ENCODE measurements at regions of chr5 and their contacts with region 1.

Region 1: GRCh38 chr5:148791334-148791667 is 35.1 kb upstream of the ADRB2 start:
- DNase-seq: no peak
- H3K4me3 ChIP-seq: no peak overlapping the region
- H3K27ac ChIP-seq: no peak overlapping the region
- H3K4me1 ChIP-seq: no peaks in the 10 kb centered on the region
- H3K27me3 ChIP-seq: no peaks in the 10 kb centered on the region
- CTCF ChIP-seq: no peak
- EP300 ChIP-seq: no peak
- POLR2A ChIP-seq: no peak
- RAD21 ChIP-seq: no peak

Region 2: GRCh38 chr5:148542812-148543211 is 248.5 kb before region 1 on chr5:
- CTCF ChIA-PET with region 1: no interaction called
- POLR2A ChIA-PET with region 1: no interaction called
- DNase-seq: no peak
- H3K4me3 ChIP-seq: no peak overlapping the region
- H3K27ac ChIP-seq: no peak overlapping the region
- H3K4me1 ChIP-seq: no peaks in the 10 kb centered on the region
- H3K27me3 ChIP-seq: peaks cover 0 to 1% (median 0%) of the 10 kb centered on the region in 4 experiments; a peak in 1 of 7 replicates
- CTCF ChIP-seq: no peak
- EP300 ChIP-seq: no peak
- POLR2A ChIP-seq: no peak
- RAD21 ChIP-seq: no peak

Region 3: DNA sequence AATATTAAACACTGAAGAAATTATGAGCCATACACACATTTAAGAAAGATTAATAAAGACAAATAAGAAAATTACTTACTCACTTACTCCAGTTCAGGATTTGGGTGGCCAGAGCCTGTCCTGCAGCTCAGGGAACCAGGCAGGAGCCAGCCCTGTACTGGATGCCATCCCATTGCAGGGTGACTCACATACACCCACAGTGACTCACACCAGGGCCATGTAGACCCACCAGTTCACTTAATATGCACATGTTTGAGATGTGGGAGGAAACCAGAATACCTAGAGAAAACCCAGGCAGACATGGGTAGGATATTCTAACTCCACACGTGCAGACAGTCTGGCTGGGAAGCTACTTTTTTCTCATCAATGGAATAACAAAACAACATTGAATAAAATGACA is 14.5 kb before region 1 on chr5:
- CTCF ChIA-PET with region 1: interaction called, 16 read pairs
- POLR2A ChIA-PET with region 1: no interaction called
- DNase-seq: no peak
- H3K4me3 ChIP-seq: no peak overlapping the region
- H3K27ac ChIP-seq: no peak overlapping the region
- H3K4me1 ChIP-seq: 0 out of 7 replicates have a peak, but pooled peaks cover 0 to 2% (median 0%) of the 10 kb centered on the region in 4 experiments
- H3K27me3 ChIP-seq: no peaks in the 10 kb centered on the region
- CTCF ChIP-seq: no peak
- EP300 ChIP-seq: no peak
- POLR2A ChIP-seq: no peak
- RAD21 ChIP-seq: no peak